HCT116 (cell line): ENCODE measurements at regions of chr2 and their contacts with region 1.

Region 1: DNA sequence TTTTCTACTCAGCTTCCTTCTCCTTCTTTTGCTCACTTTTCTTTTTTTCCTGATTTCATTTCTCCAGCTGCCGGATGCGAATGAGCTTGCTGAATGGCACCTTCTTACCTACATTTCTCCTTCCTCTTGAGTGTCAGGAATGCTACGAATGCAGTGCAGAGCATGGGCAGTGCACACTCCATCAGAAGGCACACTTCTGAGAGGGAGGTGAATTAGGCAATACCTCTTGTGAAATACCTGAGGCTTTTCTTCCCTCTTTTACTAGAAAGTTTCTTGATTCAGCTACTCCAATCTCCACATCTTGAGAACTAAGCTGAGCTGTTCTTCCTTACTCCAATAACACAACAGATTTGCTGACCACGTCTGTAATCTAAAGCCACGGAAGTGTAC is 51.1 kb downstream of the PLEKHM3 start:
- DNase-seq: no peak
- ATAC-seq: no peak
- H3K4me3 ChIP-seq: no peak overlapping the region
- H3K27ac ChIP-seq: no peak overlapping the region
- H3K4me1 ChIP-seq: no peaks in the 10 kb centered on the region
- H3K27me3 ChIP-seq: no peaks in the 10 kb centered on the region
- CTCF ChIP-seq: no peak
- POLR2A ChIP-seq: no peak
- RAD21 ChIP-seq: no peak

Region 2: GRCh38 chr2:207769597-207770486 is 204.4 kb before region 1 on chr2 and contains the start of gene FZD5:
- CTCF ChIA-PET with region 1: interaction called, 3 read pairs
- POLR2A ChIA-PET with region 1: no interaction called
- RAD21 ChIA-PET with region 1: no interaction called
- intact Hi-C with region 1: loop called (anchors 1 kb)
- DNase-seq: peak; percentile 85
- ATAC-seq: peak; percentile 91
- H3K4me3 ChIP-seq: peak within 1 kb of the TSS; percentile 69 to 83
- H3K27ac ChIP-seq: peak within 1 kb of the TSS; percentile 73
- H3K4me1 ChIP-seq: peaks cover 4 to 16% of the 10 kb centered on the region in 2 experiments; a peak in 3 of 4 replicates
- H3K27me3 ChIP-seq: no peaks in the 10 kb centered on the region
- CTCF ChIP-seq: peak; percentile 24 to 47 (median 33); a peak in 3 of 6 replicates
- POLR2A ChIP-seq: peak; percentile 57
- RAD21 ChIP-seq: peak; percentile 82
- total RNA-seq, gene FZD5: 9.0 TPM

Region 3: DNA sequence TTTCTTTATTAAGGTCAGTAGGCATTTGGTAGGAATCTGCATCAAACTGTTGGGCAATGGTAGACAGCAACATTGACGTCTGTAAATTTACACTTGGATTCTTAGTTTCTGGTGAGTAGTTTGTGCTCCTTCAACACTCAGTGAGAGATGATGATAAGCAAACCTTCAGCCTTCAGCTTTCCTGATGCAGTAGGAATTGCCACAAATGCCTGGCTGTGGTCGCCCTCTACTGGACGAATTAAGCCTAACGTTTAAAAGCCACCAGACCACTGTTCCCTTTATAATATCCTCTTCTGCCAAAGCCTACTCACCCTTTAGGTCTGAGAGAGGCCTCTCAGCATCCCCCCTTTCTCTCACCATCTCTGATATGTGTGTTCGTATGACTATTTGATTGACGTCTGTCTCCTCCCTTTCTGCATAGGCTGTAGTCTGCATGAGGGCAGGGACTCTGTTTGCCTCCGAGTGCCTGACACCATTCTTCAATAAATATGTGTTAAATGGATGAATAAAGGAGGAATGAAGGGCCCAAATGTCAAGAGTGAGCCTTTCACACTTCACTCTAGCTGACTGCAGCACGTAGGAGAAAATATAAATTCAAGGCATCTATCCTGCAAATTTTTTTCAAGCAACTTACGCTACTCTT is 98.2 kb after region 1 on chr2:
- CTCF ChIA-PET with region 1: interaction called, 3 read pairs
- POLR2A ChIA-PET with region 1: no interaction called
- RAD21 ChIA-PET with region 1: no interaction called
- intact Hi-C with region 1: loop called (anchors 5 kb)
- DNase-seq: peak; percentile 57
- ATAC-seq: peak; percentile 98
- H3K4me3 ChIP-seq: no peak overlapping the region
- H3K27ac ChIP-seq: no peak overlapping the region
- H3K4me1 ChIP-seq: no peaks in the 10 kb centered on the region
- H3K27me3 ChIP-seq: no peaks in the 10 kb centered on the region
- CTCF ChIP-seq: peak; percentile 38 to 86 (median 62); a peak in 5 of 6 replicates
- POLR2A ChIP-seq: no peak
- RAD21 ChIP-seq: peak; percentile 87